Mammary epithelial cell (primary cell): ENCODE measurements at regions of chr17 and their contacts with region 1.

Region 1: DNA sequence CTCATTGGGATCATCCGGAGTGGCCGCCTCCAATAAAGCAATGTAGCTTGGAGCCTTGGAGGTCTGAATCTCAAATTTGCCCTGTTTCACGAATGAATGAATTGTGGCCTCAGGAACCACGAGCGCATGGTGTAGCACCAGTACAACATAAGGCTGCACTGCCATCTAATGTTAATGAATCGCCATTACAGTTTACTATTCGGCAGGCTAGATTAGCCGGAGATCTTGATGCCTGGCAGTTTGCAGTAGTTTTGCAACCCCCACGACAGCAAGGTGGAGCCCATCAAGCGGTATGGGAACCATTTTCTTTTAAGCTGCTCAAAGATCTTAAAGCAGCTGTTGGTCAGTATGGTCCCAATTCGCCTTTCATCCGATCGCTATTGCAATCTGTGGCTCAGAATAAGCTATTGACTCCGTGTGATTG is 18.8 kb downstream of the ALOX15B start:
- DNase-seq: peak; percentile 76
- H3K4me3 ChIP-seq: no peak overlapping the region
- H3K27ac ChIP-seq: no peak overlapping the region
- H3K4me1 ChIP-seq: peaks cover 25% of the 10 kb centered on the region
- H3K27me3 ChIP-seq: no peaks in the 10 kb centered on the region
- CTCF ChIP-seq: peak; percentile 74 to 79

Region 2: GRCh38 chr17:7834962-7835813 is 222.5 kb before region 1 on chr17:
- CTCF ChIA-PET with region 1: no interaction called
- dilution Hi-C with region 1: no loop called
- in situ Hi-C with region 1: no loop called
- intact Hi-C with region 1: loop called (anchors 2 kb)
- DNase-seq: peak; percentile 98
- H3K4me3 ChIP-seq: peak overlapping the region; percentile 69 to 94 (median 76)
- H3K27ac ChIP-seq: peak overlapping the region; percentile 97
- H3K4me1 ChIP-seq: peaks cover 43% of the 10 kb centered on the region
- H3K27me3 ChIP-seq: no peaks in the 10 kb centered on the region
- CTCF ChIP-seq: peak; percentile 52 to 90

Region 3: DNA sequence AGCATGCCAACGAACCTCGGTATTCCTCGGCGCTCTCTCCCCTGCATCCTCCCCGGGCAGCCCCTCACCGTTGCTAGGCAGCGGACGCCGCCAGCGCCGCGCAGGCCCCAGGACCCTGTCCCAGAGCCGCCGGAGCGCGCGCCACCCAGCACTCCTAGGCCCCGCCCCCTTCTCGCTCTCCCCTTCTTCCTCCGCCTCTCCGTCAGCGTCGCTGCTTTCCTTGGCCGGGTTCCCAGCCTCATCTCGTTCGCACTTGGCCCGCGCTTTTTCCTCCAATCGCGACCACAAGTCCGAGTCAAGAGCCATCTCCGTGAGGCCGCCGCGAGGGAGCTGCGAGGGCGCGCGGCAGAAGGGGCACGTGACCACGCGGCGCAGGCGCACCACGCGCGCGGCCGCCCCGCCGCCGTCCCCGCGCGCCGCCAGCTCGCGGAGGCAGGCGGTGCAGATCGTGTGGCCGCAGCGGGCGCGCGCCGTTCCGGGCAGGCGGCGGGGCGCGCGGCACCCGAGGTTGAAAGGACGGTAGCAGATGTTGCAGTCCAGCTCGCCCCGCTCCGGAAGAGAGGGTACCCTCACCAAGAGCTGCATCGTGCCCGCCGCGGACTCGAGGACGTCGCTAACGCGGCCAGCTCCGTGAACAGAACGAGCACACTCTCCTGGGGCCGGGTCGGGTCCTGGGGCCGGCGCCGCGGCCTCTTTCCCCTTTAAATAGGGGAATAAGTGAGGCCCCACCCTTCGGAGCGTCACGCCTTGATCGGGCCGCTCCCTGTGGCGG is 141.9 kb before region 1 on chr17 and contains the start of gene RNF227:
- CTCF ChIA-PET with region 1: interaction called, 4 read pairs
- dilution Hi-C with region 1: no loop called
- in situ Hi-C with region 1: no loop called
- intact Hi-C with region 1: loop called (anchors 1 kb)
- DNase-seq: peak; percentile 94
- H3K4me3 ChIP-seq: peak within 1 kb of the TSS; percentile 48 to 76 (median 57)
- H3K27ac ChIP-seq: peak within 1 kb of the TSS; percentile 72
- H3K4me1 ChIP-seq: peaks cover 28% of the 10 kb centered on the region
- H3K27me3 ChIP-seq: no peaks in the 10 kb centered on the region
- CTCF ChIP-seq: no peak
- total RNA-seq, gene RNF227: 5.2 to 6.4 TPM

Region 4: DNA sequence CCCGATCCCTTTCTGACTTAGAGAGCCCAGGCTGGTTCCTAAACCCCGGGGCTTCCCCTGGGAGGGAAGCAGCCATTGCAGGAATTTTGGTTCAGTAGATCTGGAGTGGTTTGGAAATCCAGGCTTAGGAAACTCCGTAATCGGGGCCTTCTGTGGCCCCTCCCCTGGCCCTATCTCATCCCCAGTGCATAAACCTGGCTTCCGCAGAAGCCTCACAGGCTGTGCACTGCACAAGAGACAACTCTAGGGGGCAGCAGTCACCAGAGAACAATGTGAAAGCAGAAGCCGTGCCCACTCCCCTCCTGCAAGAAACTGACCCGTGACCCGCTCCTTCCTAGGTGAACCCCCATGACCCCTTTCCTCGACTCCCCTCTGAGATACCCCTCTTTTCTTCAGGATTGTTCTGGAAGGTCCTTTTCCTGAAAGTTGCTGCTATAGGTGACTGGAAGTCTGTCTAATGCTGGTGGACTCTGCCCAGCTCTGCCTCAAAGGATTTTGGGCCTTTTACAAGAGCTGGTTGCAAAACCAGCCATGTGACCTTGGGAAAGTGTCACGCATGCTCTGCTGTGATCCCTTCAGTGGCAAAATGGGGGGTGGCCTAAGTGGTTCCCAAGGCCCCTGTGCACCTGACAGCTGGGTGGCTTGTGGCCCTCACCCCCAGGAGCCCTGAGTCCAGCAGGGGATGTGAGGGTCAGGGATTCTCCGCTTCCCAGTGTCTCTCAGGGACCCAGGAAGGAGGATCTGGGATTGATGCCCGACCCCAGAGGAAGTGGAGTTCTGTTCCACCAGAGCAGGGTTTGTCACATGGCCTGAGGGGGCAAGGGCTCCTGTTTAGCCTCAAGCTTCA is 40.8 kb before region 1 on chr17:
- CTCF ChIA-PET with region 1: no interaction called
- dilution Hi-C with region 1: no loop called
- in situ Hi-C with region 1: no loop called
- intact Hi-C with region 1: loop called (anchors 1 kb)
- DNase-seq: no peak
- H3K4me3 ChIP-seq: peak overlapping the region in 1 of 3 experiments; percentile 42
- H3K27ac ChIP-seq: no peak overlapping the region
- H3K4me1 ChIP-seq: peaks cover 48% of the 10 kb centered on the region
- H3K27me3 ChIP-seq: no peaks in the 10 kb centered on the region
- CTCF ChIP-seq: peak; percentile 80 to 83

Region 5: DNA sequence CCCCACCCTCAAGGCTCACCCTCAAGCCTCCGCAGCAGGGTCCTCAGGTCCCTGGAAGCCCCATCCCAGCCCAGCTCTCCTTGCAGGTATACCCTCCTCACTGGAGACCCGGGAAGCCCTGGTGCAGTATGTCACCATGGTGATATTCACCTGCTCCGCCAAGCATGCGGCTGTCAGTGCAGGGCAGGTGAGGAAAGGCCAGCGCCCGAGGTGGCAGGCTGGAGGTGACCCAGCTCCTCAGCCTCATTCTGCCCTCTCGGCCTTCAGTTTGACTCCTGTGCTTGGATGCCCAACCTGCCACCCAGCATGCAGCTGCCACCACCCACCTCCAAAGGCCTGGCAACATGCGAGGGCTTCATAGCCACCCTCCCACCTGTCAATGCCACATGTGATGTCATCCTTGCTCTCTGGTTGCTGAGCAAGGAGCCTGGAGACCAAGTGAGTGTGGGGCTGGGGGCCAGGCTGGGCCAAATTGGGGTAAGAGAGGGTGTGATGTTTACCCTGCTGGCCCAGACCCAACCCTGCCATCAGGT is 10.2 kb before region 1 on chr17:
- CTCF ChIA-PET with region 1: no interaction called
- dilution Hi-C with region 1: no loop called
- in situ Hi-C with region 1: no loop called
- intact Hi-C with region 1: no loop called
- DNase-seq: no peak
- H3K4me3 ChIP-seq: no peak overlapping the region
- H3K27ac ChIP-seq: no peak overlapping the region
- H3K4me1 ChIP-seq: no peaks in the 10 kb centered on the region
- H3K27me3 ChIP-seq: no peaks in the 10 kb centered on the region
- CTCF ChIP-seq: no peak

Region 6: GRCh38 chr17:8109661-8110464 is 52.2 kb after region 1 on chr17:
- CTCF ChIA-PET with region 1: no interaction called
- dilution Hi-C with region 1: no loop called
- in situ Hi-C with region 1: no loop called
- intact Hi-C with region 1: loop called (anchors 2 kb)
- DNase-seq: peak; percentile 38
- H3K4me3 ChIP-seq: peak overlapping the region; percentile 11 to 41 (median 40)
- H3K27ac ChIP-seq: no peak overlapping the region
- H3K4me1 ChIP-seq: peaks cover 28% of the 10 kb centered on the region
- H3K27me3 ChIP-seq: no peaks in the 10 kb centered on the region
- CTCF ChIP-seq: peak; percentile 64 to 95

Region 7: GRCh38 chr17:8143764-8144719 is 86.3 kb after region 1 on chr17:
- CTCF ChIA-PET with region 1: no interaction called
- dilution Hi-C with region 1: no loop called
- in situ Hi-C with region 1: no loop called
- intact Hi-C with region 1: no loop called
- DNase-seq: no peak
- H3K4me3 ChIP-seq: no peak overlapping the region
- H3K27ac ChIP-seq: no peak overlapping the region
- H3K4me1 ChIP-seq: peaks cover 5% of the 10 kb centered on the region
- H3K27me3 ChIP-seq: no peaks in the 10 kb centered on the region
- CTCF ChIP-seq: no peak

Region 8: GRCh38 chr17:8376271-8377067 is 318.8 kb after region 1 on chr17 and contains the start of gene KRABD2:
- CTCF ChIA-PET with region 1: no interaction called
- dilution Hi-C with region 1: no loop called
- in situ Hi-C with region 1: no loop called
- intact Hi-C with region 1: loop called (anchors 1 kb)
- DNase-seq: peak; percentile 75
- H3K4me3 ChIP-seq: peak within 1 kb of the TSS; percentile 52 to 82 (median 53)
- H3K27ac ChIP-seq: no peak within 1 kb of the TSS
- H3K4me1 ChIP-seq: peaks cover 32% of the 10 kb centered on the region
- H3K27me3 ChIP-seq: no peaks in the 10 kb centered on the region
- CTCF ChIP-seq: peak; percentile 43 to 66

Region 9: DNA sequence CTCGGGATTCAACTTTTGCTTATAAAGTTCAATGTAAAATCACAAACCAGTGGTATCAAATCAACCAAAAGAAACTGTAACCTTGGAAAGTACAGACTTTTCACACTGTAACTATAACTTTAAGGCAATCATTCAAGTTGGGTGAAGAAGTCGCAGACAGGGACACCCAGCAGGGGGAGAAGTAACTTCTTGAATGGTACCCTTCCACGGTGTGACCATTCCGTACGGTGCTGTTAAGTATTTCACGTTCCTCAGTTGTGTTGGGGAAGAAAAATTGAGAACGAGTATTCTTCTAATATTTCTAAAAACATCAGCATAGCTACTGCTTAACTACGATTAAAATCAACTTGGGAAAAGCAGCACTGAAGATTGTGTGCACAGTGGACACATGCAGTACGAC is 517.0 kb after region 1 on chr17:
- CTCF ChIA-PET with region 1: no interaction called
- dilution Hi-C with region 1: no loop called
- in situ Hi-C with region 1: no loop called
- intact Hi-C with region 1: no loop called
- DNase-seq: no peak
- H3K4me3 ChIP-seq: no peak overlapping the region
- H3K27ac ChIP-seq: no peak overlapping the region
- H3K4me1 ChIP-seq: no peaks in the 10 kb centered on the region
- H3K27me3 ChIP-seq: no peaks in the 10 kb centered on the region
- CTCF ChIP-seq: peak in 1 of 2 donors; percentile 20

Region 10: DNA sequence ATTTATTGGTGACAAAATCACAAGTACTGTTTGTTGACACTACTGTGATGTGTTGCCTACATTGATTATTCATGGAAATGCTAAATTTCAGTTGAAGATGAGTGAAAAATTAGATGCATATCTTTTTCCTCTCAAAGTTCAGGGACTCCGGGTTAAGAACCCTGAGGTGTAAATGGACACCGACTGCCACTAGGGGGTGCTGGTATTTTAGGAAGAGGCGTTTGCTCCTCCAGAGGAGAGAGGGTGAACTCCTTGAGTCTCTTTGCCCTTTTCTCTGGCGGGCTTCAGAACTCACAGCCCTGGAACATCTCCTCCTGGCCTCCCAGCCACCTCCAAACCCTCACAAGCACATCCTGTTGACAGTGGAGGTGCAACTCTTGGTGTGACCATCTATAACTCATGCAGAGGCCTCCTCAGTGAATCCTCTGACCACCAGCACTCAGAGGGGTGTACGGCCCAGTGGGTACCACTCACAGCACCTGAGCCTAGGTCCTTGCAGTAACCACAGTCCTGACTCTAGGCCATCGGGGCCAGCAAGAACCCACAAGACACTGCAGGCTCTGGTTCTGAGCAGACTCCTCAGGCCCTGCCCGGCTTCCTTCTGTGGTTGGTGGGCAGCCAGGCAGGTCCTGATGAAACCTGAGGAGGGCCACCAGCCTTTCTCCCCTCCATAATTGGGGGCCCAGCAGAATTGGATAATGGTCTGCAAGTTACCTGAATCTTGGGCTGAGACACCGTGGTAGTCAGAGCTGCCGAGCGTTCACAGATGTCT is 934.0 kb after region 1 on chr17:
- CTCF ChIA-PET with region 1: no interaction called
- dilution Hi-C with region 1: no loop called
- in situ Hi-C with region 1: no loop called
- intact Hi-C with region 1: loop called (anchors 10 kb)
- DNase-seq: peak; percentile 47
- H3K4me3 ChIP-seq: no peak overlapping the region
- H3K27ac ChIP-seq: no peak overlapping the region
- H3K4me1 ChIP-seq: no peaks in the 10 kb centered on the region
- H3K27me3 ChIP-seq: no peaks in the 10 kb centered on the region
- CTCF ChIP-seq: peak; percentile 72 to 83